MCF 10A (cell line): ENCODE measurements at regions of chr5 and their contacts with region 1.

Region 1: DNA sequence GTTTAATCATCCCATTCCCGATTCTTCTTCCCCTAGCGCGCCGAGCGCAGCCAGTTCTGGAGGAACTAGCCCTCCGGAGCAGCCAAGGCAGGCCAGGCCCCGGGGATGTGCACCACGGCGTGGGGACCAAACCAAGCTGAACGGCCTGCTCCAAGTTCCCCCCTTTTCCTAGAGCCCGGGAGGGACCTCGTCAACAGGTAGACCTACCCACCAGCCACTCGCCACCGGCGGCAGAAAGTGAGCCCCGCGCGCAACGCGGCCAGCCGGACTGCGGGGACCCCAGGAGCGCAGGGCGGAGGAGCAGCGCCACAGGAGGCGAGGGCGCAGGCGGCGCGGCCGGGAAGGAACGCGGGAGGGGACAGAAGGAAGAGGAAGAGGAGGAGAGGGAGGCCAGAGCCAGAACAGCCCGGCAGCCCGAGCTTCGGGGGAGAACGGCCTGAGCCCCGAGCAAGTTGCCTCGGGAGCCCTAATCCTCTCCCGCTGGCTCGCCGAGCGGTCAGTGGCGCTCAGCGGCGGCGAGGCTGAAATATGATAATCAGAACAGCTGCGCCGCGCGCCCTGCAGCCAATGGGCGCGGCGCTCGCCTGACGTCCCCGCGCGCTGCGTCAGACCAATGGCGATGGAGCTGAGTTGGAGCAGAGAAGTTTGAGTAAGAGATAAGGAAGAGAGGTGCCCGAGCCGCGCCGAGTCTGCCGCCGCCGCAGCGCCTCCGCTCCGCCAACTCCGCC is at the start of gene ISL1:
- DNase-seq: peak; percentile 79
- H3K4me3 Mint-ChIP-seq: peak within 1 kb of the TSS; percentile 98
- H3K27ac Mint-ChIP-seq: peak within 1 kb of the TSS; percentile 83
- H3K4me1 Mint-ChIP-seq: peaks cover 46% of the 10 kb centered on the region
- H3K27me3 Mint-ChIP-seq: no peaks in the 10 kb centered on the region
- CTCF ChIP-seq: no peak
- total RNA-seq, gene ISL1: 1.2 TPM in 2 replicates

Region 2: DNA sequence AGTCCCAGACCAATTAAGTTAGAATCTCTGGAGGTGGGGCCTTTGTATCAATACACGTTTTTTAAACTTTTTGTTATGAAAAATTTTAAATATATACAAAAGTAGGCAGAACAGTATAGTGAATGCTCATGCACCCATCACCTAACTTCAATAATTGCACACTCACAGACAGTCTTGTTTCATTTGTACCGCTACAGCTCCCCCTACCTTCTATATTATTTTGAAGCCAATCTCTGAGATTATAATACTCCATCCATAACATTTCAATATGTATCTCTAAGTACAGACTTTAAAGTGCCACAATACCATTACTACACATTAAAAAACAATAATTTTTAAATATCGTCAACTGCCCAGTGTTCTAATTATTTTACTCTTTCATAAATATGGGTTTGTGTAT is 33.2 kb after region 1 on chr5:
- CTCF ChIA-PET with region 1: interaction called, 24 read pairs
- POLR2A ChIA-PET with region 1: interaction called, 6 read pairs
- intact Hi-C with region 1: loop called (anchors 1 kb)
- DNase-seq: peak; percentile 6
- H3K4me3 Mint-ChIP-seq: no peak overlapping the region
- H3K27ac Mint-ChIP-seq: no peak overlapping the region
- H3K4me1 Mint-ChIP-seq: no peaks in the 10 kb centered on the region
- H3K27me3 Mint-ChIP-seq: peaks cover 25% of the 10 kb centered on the region
- CTCF ChIP-seq: peak; percentile 36

Region 3: GRCh38 chr5:51684794-51685355 is 301.9 kb after region 1 on chr5:
- CTCF ChIA-PET with region 1: interaction called, 3 read pairs
- POLR2A ChIA-PET with region 1: interaction called, 4 read pairs
- intact Hi-C with region 1: loop called (anchors 10 kb)
- DNase-seq: peak; percentile 8
- H3K4me3 Mint-ChIP-seq: no peak overlapping the region
- H3K27ac Mint-ChIP-seq: no peak overlapping the region
- H3K4me1 Mint-ChIP-seq: no peaks in the 10 kb centered on the region
- H3K27me3 Mint-ChIP-seq: no peaks in the 10 kb centered on the region
- CTCF ChIP-seq: no peak

Region 4: DNA sequence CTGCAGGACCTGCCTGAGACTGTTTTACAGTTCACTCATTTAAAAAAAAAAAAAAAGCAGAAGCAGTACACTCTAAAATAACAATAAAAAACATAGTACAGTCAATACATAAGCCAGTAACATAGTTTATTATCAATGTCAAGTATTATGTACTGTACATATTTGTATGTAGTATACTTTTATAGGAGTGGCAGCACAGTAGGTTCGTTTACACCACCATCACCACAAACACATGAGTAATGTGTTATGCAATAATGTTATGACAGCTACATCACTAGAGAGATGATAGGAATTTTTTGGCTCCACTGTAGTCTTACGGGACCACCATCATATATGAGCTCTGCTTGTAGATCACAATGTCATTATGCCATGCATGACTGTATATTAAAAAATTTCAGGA is 463.1 kb after region 1 on chr5:
- CTCF ChIA-PET with region 1: interaction called, 5 read pairs
- POLR2A ChIA-PET with region 1: no interaction called
- intact Hi-C with region 1: loop called (anchors 1 kb)
- DNase-seq: peak; percentile 13
- H3K4me3 Mint-ChIP-seq: no peak overlapping the region
- H3K27ac Mint-ChIP-seq: no peak overlapping the region
- H3K4me1 Mint-ChIP-seq: no peaks in the 10 kb centered on the region
- H3K27me3 Mint-ChIP-seq: no peaks in the 10 kb centered on the region
- CTCF ChIP-seq: no peak

Region 5: GRCh38 chr5:51960617-51961115 is 577.7 kb after region 1 on chr5:
- CTCF ChIA-PET with region 1: interaction called, 9 read pairs
- POLR2A ChIA-PET with region 1: interaction called, 3 read pairs
- intact Hi-C with region 1: loop called (anchors 1 kb)
- DNase-seq: peak; percentile 17
- H3K4me3 Mint-ChIP-seq: no peak overlapping the region
- H3K27ac Mint-ChIP-seq: no peak overlapping the region
- H3K4me1 Mint-ChIP-seq: no peaks in the 10 kb centered on the region
- H3K27me3 Mint-ChIP-seq: no peaks in the 10 kb centered on the region
- CTCF ChIP-seq: peak; percentile 38

Region 6: DNA sequence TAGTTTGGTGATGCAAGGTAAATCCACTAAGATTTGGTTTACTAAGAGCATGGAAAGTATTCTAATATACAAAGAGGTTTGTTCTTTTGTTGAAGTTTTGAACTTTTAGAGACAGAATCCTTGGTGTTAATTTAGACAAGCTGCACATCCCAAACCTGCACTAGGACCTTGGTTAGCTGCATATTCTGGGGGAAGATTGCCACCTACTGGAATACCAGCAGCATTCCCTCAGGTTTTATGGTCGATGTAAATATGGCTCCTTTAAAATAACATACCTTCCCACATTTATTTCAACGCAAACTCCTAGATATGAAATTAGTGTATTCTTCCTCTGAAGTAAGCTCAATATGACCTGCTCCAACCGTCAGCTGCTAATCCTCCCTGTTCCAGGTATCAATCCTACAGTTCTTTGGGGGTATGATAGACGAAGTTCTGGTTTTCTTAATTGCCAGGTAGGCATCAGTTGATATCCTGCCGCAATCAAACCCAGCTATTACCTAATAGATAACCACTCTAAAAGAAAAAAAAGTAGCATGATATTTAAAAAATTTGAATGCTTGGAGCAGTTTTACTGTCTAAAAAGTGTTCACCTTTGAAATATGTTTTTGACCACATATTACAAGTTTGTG is 624.4 kb after region 1 on chr5:
- CTCF ChIA-PET with region 1: interaction called, 11 read pairs
- POLR2A ChIA-PET with region 1: no interaction called
- intact Hi-C with region 1: loop called (anchors 1 kb)
- DNase-seq: peak; percentile 59
- H3K4me3 Mint-ChIP-seq: no peak overlapping the region
- H3K27ac Mint-ChIP-seq: no peak overlapping the region
- H3K4me1 Mint-ChIP-seq: no peaks in the 10 kb centered on the region
- H3K27me3 Mint-ChIP-seq: peaks cover 38% of the 10 kb centered on the region
- CTCF ChIP-seq: peak; percentile 66